ENCODE measurements at regions of chr17 and their contacts with region 1.

Region 1: DNA sequence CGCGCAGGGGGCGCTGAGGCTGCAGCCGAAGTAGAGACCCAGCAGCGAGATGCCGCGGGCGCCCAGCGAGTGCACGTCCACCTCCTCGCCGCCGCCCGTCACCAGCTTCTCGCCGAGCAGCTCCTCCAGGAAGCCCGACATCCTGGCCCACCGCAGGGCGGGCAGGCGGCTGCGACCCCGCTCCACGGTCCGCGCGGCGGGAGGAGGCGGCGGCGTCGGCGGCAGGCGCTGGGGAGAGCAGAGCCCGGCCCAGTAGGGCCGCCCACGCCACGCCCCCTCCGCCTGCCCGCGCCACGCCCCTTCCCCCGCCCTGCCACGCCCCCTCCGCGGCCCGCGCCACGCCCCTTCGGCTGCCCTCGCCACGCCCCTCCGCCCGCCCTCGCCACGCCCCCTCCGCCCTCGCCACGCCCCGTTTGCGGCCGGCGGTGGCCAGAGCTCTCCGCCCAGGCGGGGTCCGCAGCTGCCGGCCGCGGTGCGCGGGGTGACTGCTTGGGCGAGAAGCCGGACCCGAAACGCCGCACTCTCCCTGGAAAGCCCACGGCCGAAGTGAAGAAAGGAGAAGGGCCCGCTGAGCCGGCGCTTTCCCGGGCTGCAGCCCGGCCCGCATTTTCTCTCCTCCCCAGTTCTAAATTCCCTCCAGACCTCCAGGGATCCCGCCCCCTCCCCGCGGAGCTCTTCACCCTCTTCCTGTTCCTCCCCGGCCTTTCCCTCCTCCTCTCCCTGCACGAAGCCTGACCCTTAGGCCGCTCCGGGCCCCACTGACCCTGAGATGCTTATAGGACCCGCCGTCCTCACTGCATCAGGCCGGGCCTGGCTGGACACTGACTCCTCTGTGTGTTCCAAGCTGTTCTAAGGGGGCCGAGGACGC is at the start of gene NXN:
- DNase-seq: peak; percentile 94
- ATAC-seq: peak; percentile 78
- H3K4me3 Mint-ChIP-seq: peak within 1 kb of the TSS; percentile 67
- H3K27ac Mint-ChIP-seq: no peak within 1 kb of the TSS
- H3K4me1 Mint-ChIP-seq: peaks cover 15% of the 10 kb centered on the region
- H3K27me3 Mint-ChIP-seq: peaks cover 26% of the 10 kb centered on the region
- total RNA-seq, gene NXN: 0.93 to 1.4 TPM

Region 2: GRCh38 chr17:409848-410545 is 569.8 kb before region 1 on chr17:
- CTCF ChIA-PET with region 1: interaction called, 6 read pairs
- POLR2A ChIA-PET with region 1: interaction called, 4 read pairs
- intact Hi-C with region 1: loop called in 1 of 2 experiments (anchors 1 kb)
- DNase-seq: peak; percentile 100
- ATAC-seq: peak; percentile 71
- H3K4me3 Mint-ChIP-seq: peak overlapping the region; percentile 77
- H3K27ac Mint-ChIP-seq: peak overlapping the region; percentile 82
- H3K4me1 Mint-ChIP-seq: peaks cover 54% of the 10 kb centered on the region
- H3K27me3 Mint-ChIP-seq: peaks cover 2% of the 10 kb centered on the region

Region 3: GRCh38 chr17:732067-732901 is 247.5 kb before region 1 on chr17 and contains the start of gene TLCD3A:
- CTCF ChIA-PET with region 1: interaction called, 3 read pairs
- POLR2A ChIA-PET with region 1: no interaction called
- intact Hi-C with region 1: loop called in 1 of 2 experiments (anchors 5 kb)
- DNase-seq: peak; percentile 77
- ATAC-seq: peak; percentile 68
- H3K4me3 Mint-ChIP-seq: peak within 1 kb of the TSS; percentile 87
- H3K27ac Mint-ChIP-seq: peak within 1 kb of the TSS; percentile 70
- H3K4me1 Mint-ChIP-seq: peaks cover 11% of the 10 kb centered on the region
- H3K27me3 Mint-ChIP-seq: peaks cover 21% of the 10 kb centered on the region
- total RNA-seq, gene TLCD3A: 13.8 to 25.9 TPM

Region 4: DNA sequence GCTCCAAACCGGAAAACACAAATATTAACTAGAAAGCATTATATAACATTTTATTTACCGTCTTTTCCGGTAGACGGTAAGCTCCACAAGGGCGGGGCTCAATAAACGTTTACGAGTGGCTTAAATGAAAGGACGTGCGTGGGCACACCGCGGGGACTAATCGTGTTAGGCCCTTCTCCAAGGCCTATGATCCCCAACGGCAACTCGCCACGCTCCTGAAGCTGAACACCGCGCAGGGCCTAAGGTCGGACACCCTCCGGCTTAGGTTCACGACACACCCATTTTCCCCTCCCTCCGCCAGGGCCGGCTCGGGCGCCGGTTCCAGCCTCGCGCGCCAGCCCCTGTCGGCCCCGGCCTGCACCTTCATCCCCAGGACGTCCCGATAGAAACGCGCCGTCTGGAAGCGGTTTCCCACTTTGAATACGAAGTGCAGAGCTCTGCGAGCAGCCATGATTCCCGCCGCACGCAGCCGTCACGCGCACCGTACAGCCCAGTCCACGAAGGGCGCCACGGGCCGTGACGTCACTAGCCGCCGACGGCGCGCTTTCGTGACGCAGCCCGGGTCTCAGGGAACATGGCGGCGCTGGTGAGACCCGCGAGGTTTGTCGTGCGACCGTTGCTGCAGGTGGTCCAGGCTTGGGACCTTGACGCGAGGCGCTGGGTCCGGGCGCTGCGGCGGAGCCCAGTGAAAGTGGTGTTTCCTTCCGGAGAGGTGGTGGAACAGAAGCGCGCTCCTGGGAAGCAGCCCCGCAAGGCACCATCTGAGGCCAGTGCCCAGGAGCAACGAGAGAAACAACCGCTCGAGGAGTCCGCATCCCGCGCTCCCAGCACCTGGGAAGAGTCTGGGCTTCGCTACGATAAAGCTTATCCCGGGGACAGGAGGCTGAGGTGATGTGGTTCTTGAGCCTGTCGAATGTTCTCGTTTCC is 197.7 kb before region 1 on chr17 and contains the starts of genes GLOD4 and MRM3:
- CTCF ChIA-PET with region 1: interaction called, 19 read pairs
- POLR2A ChIA-PET with region 1: interaction called, 4 read pairs
- intact Hi-C with region 1: loop called in 1 of 2 experiments (anchors 1 kb)
- DNase-seq: peak; percentile 96
- ATAC-seq: peak; percentile 89
- H3K4me3 Mint-ChIP-seq: peak within 1 kb of the TSS; percentile 97
- H3K27ac Mint-ChIP-seq: peak within 1 kb of the TSS; percentile 96
- H3K4me1 Mint-ChIP-seq: peaks cover 35% of the 10 kb centered on the region
- H3K27me3 Mint-ChIP-seq: no peaks in the 10 kb centered on the region
- total RNA-seq, gene GLOD4: 59.5 to 64.0 TPM
- total RNA-seq, gene MRM3: 20.6 to 31.4 TPM

Region 5: GRCh38 chr17:879549-880442 is 100.0 kb before region 1 on chr17:
- CTCF ChIA-PET with region 1: interaction called, 48 read pairs
- POLR2A ChIA-PET with region 1: no interaction called
- intact Hi-C with region 1: loop called in 1 of 2 experiments (anchors 1 kb)
- DNase-seq: peak; percentile 83
- ATAC-seq: peak; percentile 83
- H3K4me3 Mint-ChIP-seq: no peak overlapping the region
- H3K27ac Mint-ChIP-seq: no peak overlapping the region
- H3K4me1 Mint-ChIP-seq: peaks cover 12% of the 10 kb centered on the region
- H3K27me3 Mint-ChIP-seq: peaks cover 20% of the 10 kb centered on the region

Region 6: DNA sequence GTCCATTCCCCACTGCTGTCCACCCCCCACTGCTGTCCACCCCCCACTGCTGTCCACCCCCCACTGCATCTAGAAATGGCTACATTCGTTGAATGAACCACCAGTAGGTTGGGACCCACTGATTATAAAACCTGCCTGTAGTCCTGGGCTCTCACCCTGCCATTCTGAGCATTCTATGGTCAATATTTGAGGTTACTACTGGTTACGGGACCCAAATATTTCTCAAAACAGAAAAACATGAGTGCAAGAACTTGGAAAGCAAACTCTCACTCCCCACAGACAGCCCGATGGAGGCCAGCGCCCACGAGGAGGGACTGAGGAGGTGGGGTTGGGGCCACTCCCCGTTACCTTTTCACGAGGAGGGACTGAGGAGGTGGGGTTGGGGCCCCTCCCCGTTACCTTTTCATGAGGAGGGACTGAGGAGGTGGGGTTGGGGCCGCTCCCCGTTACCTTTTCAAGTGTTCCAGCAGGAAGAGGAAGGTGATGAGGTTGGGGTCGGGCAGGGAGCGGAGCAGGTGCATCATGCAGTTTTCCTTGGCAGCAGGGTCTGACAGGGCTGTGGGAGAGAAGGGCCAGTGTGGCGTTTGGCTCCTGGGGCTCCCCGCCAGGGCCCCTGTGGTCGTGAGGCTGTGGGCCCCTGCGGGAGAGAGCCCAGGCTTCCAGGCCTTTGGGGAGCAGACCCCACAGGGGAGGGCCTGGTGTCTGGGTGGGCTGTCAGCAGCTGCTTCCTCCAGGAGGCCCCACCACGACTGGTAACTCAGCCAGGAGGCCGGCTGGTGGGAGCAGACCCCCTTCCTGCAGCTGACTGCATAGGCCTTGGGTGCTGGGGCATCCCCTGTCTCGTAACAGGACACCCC is 29.7 kb after region 1 on chr17:
- CTCF ChIA-PET with region 1: no interaction called
- POLR2A ChIA-PET with region 1: no interaction called
- intact Hi-C with region 1: no loop called
- DNase-seq: no peak
- ATAC-seq: no peak
- H3K4me3 Mint-ChIP-seq: no peak overlapping the region
- H3K27ac Mint-ChIP-seq: no peak overlapping the region
- H3K4me1 Mint-ChIP-seq: peaks cover 8% of the 10 kb centered on the region
- H3K27me3 Mint-ChIP-seq: no peaks in the 10 kb centered on the region

Region 7: GRCh38 chr17:1043601-1044251 is 64.0 kb after region 1 on chr17:
- CTCF ChIA-PET with region 1: no interaction called
- POLR2A ChIA-PET with region 1: no interaction called
- intact Hi-C with region 1: no loop called
- DNase-seq: no peak
- ATAC-seq: no peak
- H3K4me3 Mint-ChIP-seq: no peak overlapping the region
- H3K27ac Mint-ChIP-seq: no peak overlapping the region
- H3K4me1 Mint-ChIP-seq: no peaks in the 10 kb centered on the region
- H3K27me3 Mint-ChIP-seq: no peaks in the 10 kb centered on the region

Region 8: DNA sequence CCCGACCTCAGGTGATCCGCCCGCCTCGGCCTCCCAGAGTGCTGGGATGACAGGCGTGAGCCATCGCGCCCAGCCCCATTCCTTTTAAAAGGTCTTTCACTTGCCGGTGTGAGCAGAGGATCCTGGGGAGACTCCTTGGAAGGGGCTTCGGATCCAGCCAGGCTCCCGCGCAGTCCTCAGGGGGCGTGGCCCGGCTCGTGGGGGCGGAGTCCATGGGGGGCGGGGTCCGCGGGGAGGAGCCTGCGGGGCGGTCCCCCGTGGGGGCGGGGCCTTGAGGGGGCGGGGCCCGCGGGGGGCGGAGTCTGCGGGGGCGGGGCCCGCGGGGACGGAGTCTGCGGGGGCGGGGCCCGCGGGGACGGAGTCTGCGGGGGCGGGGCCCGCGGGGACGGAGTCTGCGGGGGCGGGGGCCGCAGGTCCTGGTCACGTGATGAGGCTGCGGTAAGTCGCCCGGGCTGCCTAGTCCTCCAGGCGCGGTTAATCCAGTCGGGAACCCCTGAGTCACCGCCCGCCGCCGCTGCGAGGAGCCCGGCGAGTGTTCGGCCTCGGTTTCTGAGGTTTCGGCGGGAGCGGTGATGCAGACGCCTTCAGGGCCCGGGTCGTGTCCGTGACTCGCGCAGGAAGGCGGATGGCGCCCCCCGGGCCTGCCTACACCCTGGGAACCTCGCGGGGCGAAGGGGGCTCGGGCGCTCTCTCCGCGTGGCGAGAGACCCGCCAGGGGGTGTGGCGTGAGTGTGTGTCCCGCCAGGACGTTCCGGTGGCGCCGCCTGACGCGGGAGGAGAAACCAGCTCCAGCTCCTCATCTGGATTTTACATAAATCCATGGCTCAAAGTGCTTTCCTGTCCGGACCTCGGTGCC is 223.6 kb after region 1 on chr17:
- CTCF ChIA-PET with region 1: no interaction called
- POLR2A ChIA-PET with region 1: no interaction called
- intact Hi-C with region 1: loop called in 1 of 2 experiments (anchors 1 kb)
- DNase-seq: peak; percentile 72
- ATAC-seq: peak; percentile 56
- H3K4me3 Mint-ChIP-seq: no peak overlapping the region
- H3K27ac Mint-ChIP-seq: no peak overlapping the region
- H3K4me1 Mint-ChIP-seq: peaks cover 16% of the 10 kb centered on the region
- H3K27me3 Mint-ChIP-seq: peaks cover 2% of the 10 kb centered on the region

Region 9: GRCh38 chr17:1275962-1276736 is 296.4 kb after region 1 on chr17:
- CTCF ChIA-PET with region 1: no interaction called
- POLR2A ChIA-PET with region 1: no interaction called
- intact Hi-C with region 1: no loop called
- DNase-seq: peak; percentile 84
- ATAC-seq: peak; percentile 91
- H3K4me3 Mint-ChIP-seq: no peak overlapping the region
- H3K27ac Mint-ChIP-seq: no peak overlapping the region
- H3K4me1 Mint-ChIP-seq: peaks cover 4% of the 10 kb centered on the region
- H3K27me3 Mint-ChIP-seq: peaks cover 25% of the 10 kb centered on the region

Measured in activated CD4-positive, alpha-beta T cell treated with anti-CD3 and anti-CD28 coated beads for 36 hours (primary cell).